ENCODE measurements at regions of chr11 and their contacts with region 1.

Region 1: DNA sequence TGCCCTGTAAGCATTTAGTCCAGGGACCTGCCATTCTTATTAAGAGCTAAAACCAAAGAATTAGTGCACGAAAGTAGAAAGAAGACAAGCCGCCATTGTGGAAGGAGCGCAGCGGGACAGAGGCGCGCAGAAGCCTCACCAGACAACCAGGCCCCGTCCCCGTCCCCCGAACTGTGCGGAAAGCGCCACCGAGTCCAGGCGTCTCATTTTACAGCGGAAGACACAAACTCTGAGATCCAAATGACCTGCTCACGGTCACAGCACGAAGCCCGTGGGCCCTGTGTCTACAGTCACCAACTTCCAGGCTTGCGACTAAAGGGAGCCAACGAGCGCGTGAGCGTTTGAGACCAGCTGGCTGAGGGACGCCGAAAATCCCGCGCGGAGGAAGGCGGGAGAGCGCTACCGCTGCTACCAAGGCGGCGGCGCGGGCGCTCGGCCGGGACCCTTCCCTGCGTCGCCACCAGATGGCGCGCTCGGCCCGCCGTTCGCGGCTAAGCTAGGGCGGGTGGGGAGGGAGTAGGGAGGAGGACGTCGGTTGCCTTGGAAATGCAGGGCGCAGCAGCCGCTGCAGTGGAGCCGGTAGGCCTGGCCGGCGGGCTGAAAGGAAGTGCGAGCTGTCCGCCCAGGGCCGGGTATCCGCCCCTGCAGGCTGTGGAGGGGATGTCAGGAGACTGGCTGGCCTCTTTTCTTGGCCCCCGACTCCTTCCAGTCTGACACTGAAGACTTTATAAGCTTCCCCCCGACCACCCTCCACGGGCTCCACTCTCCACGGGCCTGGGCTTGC is 434 bp upstream of the CCDC83 start:
- DNase-seq: peak; percentile 92
- H3K4me3 Mint-ChIP-seq: peak overlapping the region; percentile 88
- H3K27ac Mint-ChIP-seq: peak overlapping the region; percentile 89
- H3K4me1 Mint-ChIP-seq: peaks cover 7% of the 10 kb centered on the region
- H3K27me3 Mint-ChIP-seq: no peaks in the 10 kb centered on the region

Region 2: GRCh38 chr11:85483861-85484260 is 370.9 kb before region 1 on chr11:
- CTCF ChIA-PET with region 1: no interaction called
- intact Hi-C with region 1: no loop called
- DNase-seq: no peak
- H3K4me3 Mint-ChIP-seq: no peak overlapping the region
- H3K27ac Mint-ChIP-seq: no peak overlapping the region
- H3K4me1 Mint-ChIP-seq: no peaks in the 10 kb centered on the region
- H3K27me3 Mint-ChIP-seq: no peaks in the 10 kb centered on the region

Region 3: DNA sequence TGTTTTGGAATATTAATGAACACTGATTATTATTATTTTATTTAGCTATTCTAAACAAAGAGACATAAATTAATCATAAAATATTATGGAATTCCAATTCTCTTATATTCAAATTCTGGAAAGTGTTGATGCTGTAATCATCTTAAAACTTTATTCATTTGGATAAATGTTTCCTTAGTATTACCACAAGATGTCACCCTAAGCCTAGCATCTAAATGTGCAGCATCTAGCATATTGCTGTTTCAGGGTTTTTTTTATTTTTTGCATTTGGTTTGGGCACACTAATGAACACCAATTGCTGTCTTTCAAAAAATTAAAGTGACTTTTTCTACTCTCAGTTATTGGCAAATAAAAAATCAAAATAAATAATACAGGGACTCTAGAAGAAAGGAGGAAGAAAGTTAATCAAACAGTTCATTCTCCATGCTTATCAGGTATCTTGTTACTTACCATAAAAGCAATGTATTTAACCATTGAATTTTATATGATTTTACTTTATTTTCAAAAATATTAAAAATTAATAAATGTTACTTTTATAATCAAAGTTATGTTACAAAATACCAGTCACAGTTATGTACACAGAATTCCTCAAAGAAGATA is 259.4 kb before region 1 on chr11:
- CTCF ChIA-PET with region 1: no interaction called
- intact Hi-C with region 1: loop called (anchors 1 kb)
- DNase-seq: no peak
- H3K4me3 Mint-ChIP-seq: no peak overlapping the region
- H3K27ac Mint-ChIP-seq: no peak overlapping the region
- H3K4me1 Mint-ChIP-seq: no peaks in the 10 kb centered on the region
- H3K27me3 Mint-ChIP-seq: no peaks in the 10 kb centered on the region

Region 4: DNA sequence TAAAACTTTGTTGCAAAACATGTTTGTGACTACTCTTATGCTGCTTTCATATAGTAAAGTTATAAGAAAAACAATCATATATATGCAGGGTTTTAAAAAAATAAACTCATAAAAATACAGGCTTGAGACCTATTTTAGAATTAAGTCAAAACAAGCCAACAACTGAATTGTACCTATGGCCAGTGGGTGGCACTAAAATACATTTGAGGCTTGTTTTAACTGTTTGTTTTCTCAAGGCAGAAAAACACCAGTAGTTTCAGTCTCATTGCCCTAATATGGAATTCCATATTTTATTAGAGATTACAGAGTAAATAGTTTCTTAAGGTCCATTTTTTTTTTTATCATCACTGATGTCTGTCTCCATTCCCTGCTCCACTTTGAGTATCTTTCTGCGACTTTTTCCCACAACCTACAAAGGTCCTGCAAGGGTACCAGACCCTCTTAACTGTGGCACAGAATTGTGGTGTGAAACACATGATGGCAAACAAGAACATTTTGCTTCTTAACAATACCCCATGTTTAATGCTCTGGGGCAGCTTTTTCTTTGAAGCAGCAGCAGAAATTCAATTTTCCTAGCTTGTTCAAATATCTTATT is 160.3 kb before region 1 on chr11:
- CTCF ChIA-PET with region 1: interaction called, 9 read pairs
- intact Hi-C with region 1: loop called (anchors 2 kb)
- DNase-seq: peak; percentile 16
- H3K4me3 Mint-ChIP-seq: no peak overlapping the region
- H3K27ac Mint-ChIP-seq: no peak overlapping the region
- H3K4me1 Mint-ChIP-seq: peaks cover 22% of the 10 kb centered on the region
- H3K27me3 Mint-ChIP-seq: no peaks in the 10 kb centered on the region

Region 5: DNA sequence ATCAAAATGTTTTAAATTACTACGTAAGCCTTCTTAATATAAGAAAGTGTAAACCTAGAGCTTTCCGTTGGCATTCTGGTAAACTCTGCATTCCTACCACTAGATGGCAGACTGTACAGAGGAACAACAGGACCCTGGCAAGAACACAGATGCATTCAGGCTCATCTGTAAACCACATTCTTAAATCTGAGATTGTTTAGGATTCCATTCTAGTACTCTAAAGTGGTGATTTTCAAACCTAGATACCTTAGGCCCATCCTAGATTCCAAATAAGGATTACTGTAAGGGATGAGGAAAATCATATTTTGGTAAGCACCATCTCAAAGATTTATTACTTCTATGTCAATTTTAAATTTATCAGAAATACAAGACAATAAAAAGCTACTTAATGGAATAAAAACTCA is 187.2 kb after region 1 on chr11:
- CTCF ChIA-PET with region 1: interaction called, 3 read pairs
- intact Hi-C with region 1: loop called (anchors 2 kb)
- DNase-seq: peak; percentile 77
- H3K4me3 Mint-ChIP-seq: no peak overlapping the region
- H3K27ac Mint-ChIP-seq: peak overlapping the region; percentile 73
- H3K4me1 Mint-ChIP-seq: peaks cover 69% of the 10 kb centered on the region
- H3K27me3 Mint-ChIP-seq: no peaks in the 10 kb centered on the region

Region 6: DNA sequence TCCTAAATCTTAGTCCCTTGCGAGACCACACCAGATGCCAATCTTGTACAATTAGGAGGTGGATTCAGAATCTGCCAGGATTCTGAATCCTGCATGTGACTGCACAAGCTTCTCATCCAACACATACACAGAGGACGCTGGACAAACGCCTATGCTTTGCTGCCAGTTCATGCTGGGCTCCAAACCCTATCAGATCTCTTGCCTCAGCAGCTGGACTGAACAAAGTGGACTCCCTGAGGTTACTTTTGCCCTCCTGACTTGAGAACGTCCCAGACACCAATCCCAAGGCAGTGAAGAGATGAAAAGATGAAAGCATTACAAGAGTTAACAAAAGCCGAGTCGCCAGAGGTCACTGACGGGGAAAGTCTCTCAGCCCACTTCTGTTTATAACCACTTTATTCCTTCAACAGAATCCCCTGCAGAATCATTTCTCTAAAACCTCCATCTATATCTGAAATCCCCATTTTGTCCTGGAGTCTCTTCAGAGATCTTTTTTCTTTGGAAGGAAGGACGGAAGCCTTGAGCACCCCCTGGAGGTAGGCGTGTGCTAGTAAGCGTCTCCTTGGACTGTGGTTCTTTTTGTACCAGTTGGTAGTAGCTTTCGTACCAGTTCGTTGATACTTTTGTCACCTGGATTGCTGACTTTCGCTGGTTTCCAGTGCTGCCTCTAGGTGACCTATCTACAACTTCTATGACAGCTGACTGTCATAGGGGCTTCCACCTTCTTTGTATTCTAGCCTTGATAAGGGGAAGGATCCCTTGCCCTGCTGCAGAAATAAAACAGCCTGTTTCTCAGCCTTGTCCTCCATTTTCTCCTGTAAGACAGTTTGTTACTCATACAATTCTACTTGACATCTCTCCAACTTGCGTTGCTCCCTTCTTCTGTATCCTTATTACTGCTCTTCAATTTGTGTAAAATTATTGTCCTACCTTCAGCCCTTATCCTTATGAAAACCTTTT is 363.7 kb after region 1 on chr11:
- CTCF ChIA-PET with region 1: no interaction called
- intact Hi-C with region 1: loop called (anchors 1 kb)
- DNase-seq: peak; percentile 80
- H3K4me3 Mint-ChIP-seq: peak overlapping the region; percentile 14
- H3K27ac Mint-ChIP-seq: peak overlapping the region; percentile 90
- H3K4me1 Mint-ChIP-seq: peaks cover 82% of the 10 kb centered on the region
- H3K27me3 Mint-ChIP-seq: peaks cover 3% of the 10 kb centered on the region

Region 7: GRCh38 chr11:86608251-86608799 is 753.6 kb after region 1 on chr11:
- CTCF ChIA-PET with region 1: no interaction called
- intact Hi-C with region 1: loop called (anchors 1 kb)
- DNase-seq: peak; percentile 70
- H3K4me3 Mint-ChIP-seq: no peak overlapping the region
- H3K27ac Mint-ChIP-seq: no peak overlapping the region
- H3K4me1 Mint-ChIP-seq: peaks cover 29% of the 10 kb centered on the region
- H3K27me3 Mint-ChIP-seq: no peaks in the 10 kb centered on the region

Region 8: GRCh38 chr11:86818466-86819192 is 963.9 kb after region 1 on chr11:
- CTCF ChIA-PET with region 1: interaction called, 3 read pairs
- intact Hi-C with region 1: loop called (anchors 1 kb)
- DNase-seq: no peak
- H3K4me3 Mint-ChIP-seq: no peak overlapping the region
- H3K27ac Mint-ChIP-seq: no peak overlapping the region
- H3K4me1 Mint-ChIP-seq: peaks cover 4% of the 10 kb centered on the region
- H3K27me3 Mint-ChIP-seq: peaks cover 21% of the 10 kb centered on the region